Motor neuron (in vitro differentiated cells): ENCODE measurements at regions of chr10 and their contacts with region 1.

Region 1: DNA sequence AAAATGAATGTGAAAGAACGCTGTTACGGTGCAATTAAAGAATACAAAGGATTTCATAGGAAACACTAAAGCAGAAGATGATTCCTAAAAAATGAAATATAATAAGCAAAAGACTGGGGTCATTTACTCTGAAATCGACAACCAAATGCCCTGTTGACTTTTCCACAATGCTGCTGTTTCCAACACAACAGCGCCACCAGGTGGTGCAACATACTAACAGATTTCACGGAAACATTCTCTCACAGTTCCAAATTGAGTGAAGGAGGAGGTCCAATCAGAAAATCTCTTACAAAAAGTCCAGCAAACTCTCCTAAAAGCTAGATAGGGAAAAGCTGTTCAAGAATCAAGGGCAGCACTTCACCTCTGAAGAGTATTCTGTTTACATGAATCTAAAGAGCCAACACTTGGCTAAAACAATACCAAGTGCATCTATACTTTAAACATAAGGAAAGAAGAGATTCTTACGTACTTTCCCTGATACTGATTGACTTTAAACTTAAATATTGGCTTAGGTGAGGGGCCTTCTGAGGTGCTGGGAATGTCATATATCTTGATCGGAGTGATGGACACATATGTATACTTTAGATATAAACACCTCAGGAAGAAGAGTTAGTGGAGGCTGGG is 55.9 kb downstream of the UPF2 start:
- ATAC-seq: peak; percentile 26 to 85 (median 56)
- H3K4me3 ChIP-seq: no peak overlapping the region
- H3K27ac ChIP-seq: no peak overlapping the region
- H3K4me1 ChIP-seq: no peaks in the 10 kb centered on the region

Region 2: DNA sequence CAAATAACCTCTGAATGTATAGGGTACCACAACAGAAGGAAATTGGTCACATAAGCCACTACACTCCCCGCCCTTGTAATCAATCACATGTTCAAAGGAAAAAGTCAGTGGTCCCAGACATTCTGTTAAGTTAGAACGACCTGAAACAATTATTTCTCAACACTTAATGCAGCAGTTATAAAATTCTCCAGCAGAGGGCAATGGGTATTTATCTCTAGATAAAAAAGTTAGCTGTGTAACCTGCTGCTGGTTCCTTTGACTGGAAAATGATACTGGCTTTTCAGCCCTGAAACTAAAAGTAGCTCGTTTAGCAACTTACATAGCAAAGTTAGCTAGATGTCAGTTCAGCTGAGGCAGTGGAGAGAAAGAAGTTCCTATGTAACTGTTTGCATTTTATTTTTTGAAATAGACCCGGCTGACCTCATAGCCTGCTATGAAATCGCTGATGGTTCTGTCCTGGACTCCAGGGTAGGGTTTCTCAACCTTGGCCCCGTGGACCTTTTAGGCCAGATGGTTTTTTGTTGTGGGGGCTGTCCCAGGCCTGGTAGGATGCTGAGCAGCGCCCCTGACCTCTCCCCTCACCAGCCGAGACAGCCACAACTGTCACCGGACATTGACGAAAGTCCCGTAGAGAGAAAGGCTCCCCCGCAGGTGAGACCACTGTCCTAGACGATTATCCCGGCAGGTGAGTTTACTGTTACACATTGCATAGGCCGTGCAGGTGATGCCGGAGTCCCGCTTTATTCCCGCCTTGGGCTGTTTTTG is 203.7 kb before region 1 on chr10:
- in situ Hi-C with region 1: loop called in 7 of 9 experiments (anchors 10 to 25 kb)
- ATAC-seq: peak in 4 of 8 experiments; percentile 33 to 71 (median 63)
- H3K4me3 ChIP-seq: no peak overlapping the region
- H3K27ac ChIP-seq: no peak overlapping the region
- H3K4me1 ChIP-seq: no peaks in the 10 kb centered on the region

Region 3: DNA sequence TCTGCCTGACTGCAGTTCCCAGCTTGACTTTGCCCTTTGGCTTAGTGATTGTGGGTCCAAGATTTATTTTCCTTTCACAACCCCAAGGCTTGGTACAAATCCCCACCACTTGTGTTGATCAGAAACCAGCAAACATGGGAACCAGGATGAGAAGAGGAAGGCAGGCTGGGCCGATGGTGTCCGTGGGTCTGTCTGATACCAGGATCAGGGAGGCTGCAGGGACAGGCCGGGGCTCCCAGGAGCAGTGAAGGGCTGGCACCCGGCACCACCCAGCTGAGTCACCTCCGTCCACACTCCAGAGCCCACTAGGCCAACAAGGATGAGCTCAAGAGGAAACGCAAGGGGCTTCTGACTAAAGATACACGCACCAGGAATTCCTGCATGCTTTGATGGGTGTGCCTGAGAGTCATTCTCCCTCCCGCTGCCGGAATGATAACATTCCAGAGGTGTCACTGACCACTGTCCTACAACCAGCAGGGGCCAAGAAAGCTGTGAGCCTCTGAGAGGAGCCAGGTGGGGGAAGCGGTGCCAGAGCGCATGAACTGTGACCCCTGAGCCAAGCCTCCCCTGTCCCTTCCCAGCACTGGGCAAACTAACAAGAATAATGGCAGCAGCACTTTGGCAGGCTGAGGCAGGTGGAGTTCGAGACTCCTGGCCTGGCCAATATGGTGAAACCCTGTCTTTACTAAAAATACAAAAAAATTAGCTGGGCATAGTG is 192.8 kb before region 1 on chr10:
- in situ Hi-C with region 1: loop called (anchors 10 to 25 kb)
- ATAC-seq: peak; percentile 45 to 96 (median 59)
- H3K4me3 ChIP-seq: no peak overlapping the region
- H3K27ac ChIP-seq: peak overlapping the region; percentile 6 to 7
- H3K4me1 ChIP-seq: peaks cover 3 to 4% of the 10 kb centered on the region in 2 donors